ENCODE measurements at regions of chr5 and their contacts with region 1.

Region 1: DNA sequence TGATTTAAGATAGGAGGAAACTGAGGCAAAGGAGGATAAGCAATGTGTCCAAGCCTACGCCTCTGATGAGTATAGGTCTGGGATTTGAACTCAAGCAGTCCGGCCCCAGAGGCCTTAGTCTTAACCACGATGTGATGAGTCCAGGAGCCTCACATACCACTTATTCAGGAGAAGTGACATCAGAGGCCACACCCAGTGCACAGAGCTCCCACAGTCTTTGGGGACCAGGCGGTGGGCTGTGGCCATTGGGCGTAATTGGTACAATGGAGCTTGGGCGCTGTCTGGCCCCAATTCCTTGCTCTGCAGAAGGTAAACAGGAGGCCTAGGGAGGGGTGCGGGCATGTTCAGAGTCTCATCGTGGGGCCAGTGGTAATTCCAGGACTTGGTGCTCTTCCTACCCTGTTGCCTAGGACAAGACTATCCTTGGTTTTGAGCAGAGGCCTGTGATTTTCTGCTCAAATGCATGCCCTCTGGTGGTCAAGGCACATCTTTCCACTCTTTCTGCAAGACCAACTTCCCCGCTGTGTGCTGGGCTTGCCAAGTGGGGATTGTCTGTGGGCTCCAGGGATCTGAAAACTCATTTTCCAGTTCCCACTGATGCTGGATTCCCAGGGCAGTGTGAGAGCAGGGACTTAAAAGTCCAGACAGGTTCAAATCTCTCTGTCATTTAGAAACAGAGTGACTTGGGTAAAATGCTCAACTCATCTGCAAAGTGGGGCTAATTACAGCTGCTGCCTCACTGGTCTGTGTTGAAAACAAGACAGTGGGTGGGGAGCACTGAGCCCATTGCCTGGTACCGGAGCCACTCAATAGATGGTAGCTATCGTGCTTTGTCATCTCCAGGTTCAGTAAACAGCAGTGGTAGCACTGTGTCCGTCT is 15.8 kb downstream of the NDST1 start:
- DNase-seq: peak; percentile 63
- H3K4me3 ChIP-seq: no peak overlapping the region
- H3K27ac ChIP-seq: no peak overlapping the region
- H3K27me3 ChIP-seq: no peaks in the 10 kb centered on the region
- CTCF ChIP-seq: peak; percentile 74

Region 2: DNA sequence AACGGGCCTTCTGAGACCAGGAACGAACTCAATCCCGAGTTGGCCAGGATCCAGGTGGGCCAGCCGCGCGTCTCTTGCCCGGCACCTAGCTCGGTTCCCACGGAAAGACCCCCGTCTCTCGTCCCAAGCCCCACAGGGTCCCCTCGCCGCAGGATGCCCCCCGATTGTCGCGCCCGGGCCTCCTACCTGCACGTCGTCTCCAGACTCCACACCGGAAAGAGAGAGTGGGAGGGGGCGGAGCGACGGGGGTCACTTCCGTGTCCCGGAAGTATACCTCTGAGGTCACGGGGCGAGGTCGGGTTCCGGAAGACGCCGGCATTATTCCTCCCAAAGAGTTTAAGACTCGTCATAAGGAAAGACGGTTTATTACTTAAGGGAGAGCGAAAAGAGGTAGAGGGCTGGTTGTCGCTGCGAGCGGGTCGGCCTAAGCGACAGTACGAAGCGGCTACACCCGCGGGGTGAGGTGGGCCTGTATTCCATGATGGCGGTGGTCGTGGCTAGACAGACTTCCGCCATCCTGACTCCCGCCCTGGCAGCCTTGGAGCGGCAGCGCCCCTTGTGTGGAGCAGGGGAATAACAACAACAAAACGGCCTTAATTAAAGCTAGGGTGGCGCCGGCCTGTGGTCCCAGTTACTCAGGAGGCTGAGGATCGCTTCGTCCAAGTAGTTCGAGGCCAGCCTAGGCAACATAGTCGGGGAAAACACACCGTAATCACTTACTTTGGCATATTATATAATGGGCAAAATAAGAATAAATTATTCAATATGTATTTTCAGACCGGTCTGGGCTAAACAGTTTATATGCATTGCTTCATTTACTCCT is 74.0 kb before region 1 on chr5 and contains the start of gene RPS14:
- CTCF ChIA-PET with region 1: interaction called, 12 read pairs
- POLR2A ChIA-PET with region 1: no interaction called
- DNase-seq: peak; percentile 76
- H3K4me3 ChIP-seq: peak within 1 kb of the TSS; percentile 97
- H3K27ac ChIP-seq: peak within 1 kb of the TSS; percentile 94
- H3K27me3 ChIP-seq: no peaks in the 10 kb centered on the region
- CTCF ChIP-seq: peak; percentile 85
- polyA plus RNA-seq, gene RPS14: 3,620 and 4,046 TPM in 2 replicates

Region 3: DNA sequence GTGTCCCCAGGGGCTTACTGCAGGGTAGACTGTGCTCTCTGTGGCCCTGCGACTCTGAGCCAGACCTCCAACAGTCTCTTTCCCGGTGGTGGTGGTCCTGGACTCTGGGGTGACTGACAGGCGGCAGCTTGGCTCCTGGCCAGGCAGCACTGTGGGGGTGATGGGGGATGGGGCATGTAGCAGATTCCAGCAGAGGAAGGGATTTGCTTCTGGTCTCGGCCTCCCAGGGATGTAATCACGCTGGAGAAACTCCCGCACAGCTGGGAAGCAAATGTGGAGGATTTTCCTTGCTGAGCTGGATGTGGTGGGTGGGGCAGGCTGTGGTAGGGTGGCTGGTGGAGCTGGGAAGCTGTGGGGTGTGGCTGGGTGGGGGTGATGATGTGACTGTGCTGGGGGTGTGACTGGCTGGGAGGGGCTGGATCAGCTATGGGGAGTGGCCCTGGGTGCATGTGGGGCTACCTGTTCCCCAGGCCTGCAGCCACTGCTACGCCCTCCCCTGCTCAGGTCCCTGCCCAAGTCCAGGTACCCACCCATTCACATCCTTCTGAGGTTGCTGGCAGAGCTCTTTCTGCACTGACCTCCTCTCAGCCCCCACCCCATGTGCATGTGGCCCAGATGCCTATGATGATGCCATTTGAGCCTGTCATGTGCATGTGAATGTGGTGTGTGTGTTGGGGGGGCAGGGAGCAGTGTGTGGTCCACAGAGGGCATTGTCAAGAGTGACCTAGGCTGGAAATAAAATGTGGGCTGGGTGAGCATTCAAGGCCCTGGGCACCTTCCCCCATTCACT is 11.9 kb before region 1 on chr5:
- CTCF ChIA-PET with region 1: interaction called, 28 read pairs
- POLR2A ChIA-PET with region 1: no interaction called
- DNase-seq: no peak
- H3K4me3 ChIP-seq: no peak overlapping the region
- H3K27ac ChIP-seq: peak overlapping the region; percentile 32
- H3K27me3 ChIP-seq: no peaks in the 10 kb centered on the region
- CTCF ChIP-seq: no peak

Region 4: DNA sequence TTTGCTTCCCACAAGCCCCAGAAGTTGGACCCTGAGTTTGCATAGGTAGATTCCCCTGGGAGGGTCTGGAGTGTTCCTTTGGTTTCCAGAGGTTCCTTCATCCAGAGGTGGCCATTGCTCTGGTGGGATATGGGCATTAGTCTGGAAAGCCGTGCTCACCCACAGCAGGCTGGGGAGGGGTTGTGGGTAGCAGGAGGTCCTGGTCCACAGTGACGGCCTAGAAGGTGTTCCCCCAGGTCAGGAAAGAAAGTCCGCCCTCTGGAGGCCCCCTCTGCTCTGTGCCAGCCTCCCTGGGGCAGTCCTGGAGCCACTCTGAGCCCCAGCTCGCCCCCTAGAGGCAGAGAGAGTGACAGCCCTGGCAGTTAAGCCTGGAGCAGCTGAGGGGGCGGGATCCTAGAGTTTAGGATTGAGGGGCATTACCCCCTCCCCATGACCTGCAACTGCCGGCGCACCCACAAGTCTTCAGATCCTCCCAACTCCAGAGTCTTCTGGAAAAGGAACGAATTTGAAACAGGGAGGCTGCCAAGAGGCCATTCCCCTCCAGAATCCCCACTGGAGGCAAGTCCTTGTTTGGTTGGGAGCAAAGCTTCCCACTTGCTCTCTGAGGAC is 21.0 kb after region 1 on chr5:
- CTCF ChIA-PET with region 1: interaction called, 10 read pairs
- POLR2A ChIA-PET with region 1: no interaction called
- DNase-seq: no peak
- H3K4me3 ChIP-seq: no peak overlapping the region
- H3K27ac ChIP-seq: no peak overlapping the region
- H3K27me3 ChIP-seq: no peaks in the 10 kb centered on the region
- CTCF ChIP-seq: peak; percentile 80

Region 5: DNA sequence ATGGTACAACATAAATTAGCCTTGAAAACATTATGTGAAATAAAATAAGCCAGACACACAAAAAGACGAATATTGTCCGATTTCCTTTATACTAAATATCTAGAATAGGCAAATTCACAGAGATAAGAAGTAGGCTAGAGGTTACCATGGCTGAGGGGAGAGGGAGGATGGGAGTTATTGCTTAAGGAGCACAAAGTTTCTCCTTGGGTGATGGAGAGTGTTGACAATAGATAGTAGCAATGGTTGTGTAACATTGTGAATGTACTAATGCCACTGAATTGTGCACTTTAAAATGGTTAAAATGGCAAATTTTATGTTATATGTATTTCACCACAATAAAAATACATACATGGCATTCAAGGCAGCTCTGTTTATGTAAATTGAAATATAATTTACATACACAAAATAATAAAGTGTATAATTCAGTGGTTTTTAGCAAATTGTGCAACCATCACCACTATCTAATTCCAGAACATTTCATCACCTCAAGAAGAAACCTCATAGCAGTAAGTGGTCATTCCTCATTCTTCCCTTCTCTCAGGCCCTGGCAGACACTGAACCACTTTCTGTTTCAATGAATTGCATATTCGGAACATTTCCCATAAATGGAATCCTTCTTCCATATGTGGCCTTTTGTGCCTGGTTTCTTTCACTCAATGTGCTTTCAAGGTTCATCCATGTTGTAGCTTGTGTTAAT is 43.5 kb after region 1 on chr5:
- CTCF ChIA-PET with region 1: no interaction called
- POLR2A ChIA-PET with region 1: no interaction called
- DNase-seq: peak; percentile 50
- H3K4me3 ChIP-seq: no peak overlapping the region
- H3K27ac ChIP-seq: peak overlapping the region; percentile 21
- H3K27me3 ChIP-seq: no peaks in the 10 kb centered on the region
- CTCF ChIP-seq: no peak